HCT116 (cell line): ENCODE measurements at regions of chr9 and their contacts with region 1.

Region 1: GRCh38 chr9:15606643-15607472 is 54.0 kb downstream of the CCDC171 start:
- DNase-seq: peak; percentile 22
- ATAC-seq: 0 out of 2 replicates have a peak, but pooled peaks have one; percentile 42
- H3K4me3 ChIP-seq: no peak overlapping the region
- H3K27ac ChIP-seq: no peak overlapping the region
- H3K4me1 ChIP-seq: no peaks in the 10 kb centered on the region
- H3K27me3 ChIP-seq: no peaks in the 10 kb centered on the region
- CTCF ChIP-seq: peak; percentile 47 to 71 (median 57); a peak in 4 of 6 replicates
- POLR2A ChIP-seq: no peak
- RAD21 ChIP-seq: peak; percentile 65

Region 2: GRCh38 chr9:15104826-15105420 is 501.9 kb before region 1 on chr9:
- CTCF ChIA-PET with region 1: no interaction called
- POLR2A ChIA-PET with region 1: no interaction called
- RAD21 ChIA-PET with region 1: no interaction called
- intact Hi-C with region 1: loop called (anchors 5 kb)
- DNase-seq: peak; percentile 16
- ATAC-seq: peak; percentile 92
- H3K4me3 ChIP-seq: no peak overlapping the region
- H3K27ac ChIP-seq: no peak overlapping the region
- H3K4me1 ChIP-seq: no peaks in the 10 kb centered on the region
- H3K27me3 ChIP-seq: peaks cover 9% of the 10 kb centered on the region; the same call in 1 of the 2 replicates
- CTCF ChIP-seq: peak; percentile 54 to 74 (median 74); a peak in 5 of 6 replicates
- POLR2A ChIP-seq: no peak
- RAD21 ChIP-seq: peak; percentile 52

Region 3: GRCh38 chr9:15277400-15278090 is 329.3 kb before region 1 on chr9:
- CTCF ChIA-PET with region 1: interaction called, 8 read pairs
- POLR2A ChIA-PET with region 1: no interaction called
- RAD21 ChIA-PET with region 1: no interaction called
- intact Hi-C with region 1: loop called (anchors 1 kb)
- DNase-seq: peak; percentile 4
- ATAC-seq: no peak
- H3K4me3 ChIP-seq: no peak overlapping the region
- H3K27ac ChIP-seq: no peak overlapping the region
- H3K4me1 ChIP-seq: peaks cover 4 to 8% of the 10 kb centered on the region in 2 experiments; a peak in 2 of 4 replicates
- H3K27me3 ChIP-seq: no peaks in the 10 kb centered on the region
- CTCF ChIP-seq: peak in 2 of 3 experiments; percentile 40 to 52; a peak in 3 of 6 replicates
- POLR2A ChIP-seq: no peak
- RAD21 ChIP-seq: peak; percentile 63

Region 4: GRCh38 chr9:15552636-15553527 is 54.0 kb before region 1 on chr9 and contains the start of gene CCDC171:
- CTCF ChIA-PET with region 1: interaction called, 19 read pairs
- POLR2A ChIA-PET with region 1: no interaction called
- RAD21 ChIA-PET with region 1: interaction called, 3 to 9 read pairs
- intact Hi-C with region 1: loop called (anchors 2 kb)
- DNase-seq: peak; percentile 86
- ATAC-seq: peak; percentile 96
- H3K4me3 ChIP-seq: peak within 1 kb of the TSS; percentile 72 to 75
- H3K27ac ChIP-seq: peak within 1 kb of the TSS; percentile 71
- H3K4me1 ChIP-seq: peaks cover 5 to 22% of the 10 kb centered on the region in 2 experiments; a peak in 3 of 4 replicates
- H3K27me3 ChIP-seq: no peaks in the 10 kb centered on the region
- CTCF ChIP-seq: no peak
- POLR2A ChIP-seq: peak; percentile 89
- RAD21 ChIP-seq: no peak
- total RNA-seq, gene CCDC171: 2.6 TPM